Activated CD4-positive, alpha-beta memory T cell treated with anti-CD3 and anti-CD28 coated beads, Interleukin-2, amount 10 ng/mL, durations not matched to agents 7 days and 5 days (primary cell): ENCODE measurements at regions of chr6 and their contacts with region 1.

Region 1: DNA sequence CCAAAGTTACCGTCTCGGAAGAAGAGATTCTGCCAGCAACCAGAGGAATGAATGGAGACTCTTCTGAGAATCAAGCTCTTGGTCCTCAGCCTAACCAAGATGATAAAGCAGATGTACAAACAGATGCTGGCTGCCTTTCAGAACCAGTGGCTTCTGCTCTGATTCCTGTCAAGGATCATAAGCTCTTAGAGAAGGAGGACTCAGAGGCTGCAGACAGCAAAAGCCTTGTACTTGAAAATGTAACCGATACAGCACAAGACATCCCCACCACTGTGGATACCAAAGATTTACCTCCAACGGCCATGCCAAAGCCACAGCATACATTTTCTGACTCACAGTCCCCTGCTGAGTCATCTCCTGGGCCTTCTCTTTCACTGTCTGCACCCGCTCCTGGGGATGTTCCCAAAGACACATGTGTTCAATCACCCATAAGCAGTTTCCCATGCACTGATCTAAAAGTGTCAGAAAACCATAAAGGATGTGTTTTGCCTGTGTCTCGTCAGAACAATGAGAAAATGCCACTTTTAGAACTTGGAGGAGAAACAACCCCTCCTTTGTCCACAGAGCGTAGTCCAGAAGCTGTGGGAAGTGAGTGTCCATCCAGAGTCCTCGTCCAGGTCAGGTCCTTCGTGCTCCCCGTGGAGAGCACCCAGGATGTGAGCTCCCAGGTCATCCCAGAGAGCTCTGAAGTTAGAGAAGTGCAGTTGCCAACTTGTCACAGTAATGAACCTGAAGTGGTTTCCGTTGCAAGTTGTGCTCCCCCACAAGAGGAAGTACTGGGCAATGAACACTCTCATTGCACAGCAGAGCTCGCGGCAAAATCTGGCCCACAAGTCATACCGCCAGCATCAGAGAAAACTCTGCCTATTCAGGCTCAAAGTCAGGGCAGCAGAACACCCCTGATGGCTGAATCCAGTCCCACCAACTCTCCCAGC is 109.6 kb downstream of the RTN4IP1 start:
- DNase-seq: peak; percentile 89
- H3K4me3 Mint-ChIP-seq: peak overlapping the region; percentile 79
- H3K27ac Mint-ChIP-seq: peak overlapping the region; percentile 97
- H3K4me1 Mint-ChIP-seq: peaks cover 64% of the 10 kb centered on the region
- H3K27me3 Mint-ChIP-seq: no peaks in the 10 kb centered on the region

Region 2: DNA sequence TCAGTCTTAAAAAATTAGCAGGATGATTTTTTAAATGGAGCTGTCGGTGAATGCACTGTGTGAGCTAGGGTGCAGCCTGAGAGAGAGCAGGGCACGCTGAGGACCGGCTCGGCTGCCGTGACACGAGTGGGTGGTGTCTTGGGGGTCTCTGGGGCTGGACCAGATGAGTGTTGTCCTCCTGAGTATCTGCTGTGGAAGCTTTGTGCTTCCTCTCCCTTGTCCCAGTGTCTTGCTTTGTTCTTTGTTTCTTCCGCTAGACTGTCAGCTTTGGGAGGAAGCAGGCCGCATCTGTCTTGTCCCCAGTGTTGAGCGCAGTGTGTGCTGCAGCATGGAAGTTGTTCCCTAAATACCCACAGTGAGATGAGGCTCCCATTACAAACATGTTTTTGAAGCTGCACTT is 20.2 kb after region 1 on chr6:
- CTCF ChIA-PET with region 1: interaction called, 8 read pairs
- POLR2A ChIA-PET with region 1: interaction called, 123 read pairs
- DNase-seq: no peak
- H3K4me3 Mint-ChIP-seq: no peak overlapping the region
- H3K27ac Mint-ChIP-seq: no peak overlapping the region
- H3K4me1 Mint-ChIP-seq: peaks cover 48% of the 10 kb centered on the region
- H3K27me3 Mint-ChIP-seq: no peaks in the 10 kb centered on the region

Region 3: DNA sequence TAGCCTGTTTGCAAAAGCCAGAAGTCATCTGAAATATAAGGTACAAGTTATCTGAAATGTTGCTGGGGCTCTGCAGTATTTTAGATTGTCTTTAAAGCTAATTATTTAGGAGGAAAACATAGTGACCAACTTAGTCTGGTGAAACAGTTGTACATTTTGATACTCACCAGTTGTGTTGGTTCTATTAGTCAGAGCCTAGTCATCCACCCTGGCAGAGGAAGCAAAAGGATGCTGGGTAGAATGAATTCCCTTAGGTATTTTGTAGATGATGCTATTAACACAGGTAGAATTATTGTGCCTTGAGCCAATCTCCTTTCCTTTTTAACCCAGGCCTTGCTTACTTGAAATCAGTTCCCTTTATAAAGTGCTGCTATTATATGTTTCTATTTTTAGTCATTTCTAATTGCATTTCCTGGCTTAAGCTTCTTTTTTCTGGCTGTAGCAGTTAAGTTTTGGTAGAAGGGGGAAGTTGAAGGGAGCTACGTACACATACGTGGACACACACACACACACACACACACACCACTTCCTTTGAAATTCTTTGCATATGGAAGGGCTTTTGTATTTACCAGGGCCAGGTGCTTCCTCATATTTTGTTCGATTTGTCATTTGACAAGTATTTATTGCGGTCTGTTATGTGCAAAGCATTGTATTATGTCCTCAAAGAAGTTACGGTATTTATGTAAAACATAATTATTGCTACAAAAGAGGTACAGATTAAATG is 27.1 kb after region 1 on chr6:
- CTCF ChIA-PET with region 1: no interaction called
- POLR2A ChIA-PET with region 1: interaction called, 27 read pairs
- DNase-seq: no peak
- H3K4me3 Mint-ChIP-seq: no peak overlapping the region
- H3K27ac Mint-ChIP-seq: peak overlapping the region; percentile 44
- H3K4me1 Mint-ChIP-seq: peaks cover 30% of the 10 kb centered on the region
- H3K27me3 Mint-ChIP-seq: no peaks in the 10 kb centered on the region

Region 4: DNA sequence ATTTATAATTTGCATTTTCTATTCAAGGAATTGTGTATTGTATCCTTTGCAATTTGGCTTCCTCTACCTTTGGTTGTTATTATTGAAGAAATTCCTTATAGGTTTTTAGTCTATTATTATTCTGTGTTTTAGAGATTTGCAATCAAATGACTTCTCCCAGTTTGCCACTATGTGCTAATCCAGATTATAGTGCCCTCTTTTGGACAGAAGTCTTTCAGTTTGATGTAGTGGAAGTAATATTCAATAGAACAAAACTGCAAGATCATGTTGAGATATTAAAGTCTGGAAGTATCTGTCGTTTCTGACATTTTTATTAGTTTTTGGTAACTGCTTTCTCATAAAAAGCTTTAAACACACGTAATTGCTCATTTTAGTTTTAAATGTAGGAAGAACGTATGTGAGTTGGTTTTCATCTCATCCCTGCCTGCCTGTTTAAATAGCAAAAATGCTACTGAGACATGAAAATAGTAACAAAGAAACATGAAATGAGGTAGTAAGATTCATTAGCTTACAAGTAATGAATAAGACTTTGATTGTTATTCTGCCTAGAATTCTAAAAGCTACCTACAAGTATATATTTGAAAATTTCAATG is 36.7 kb after region 1 on chr6:
- CTCF ChIA-PET with region 1: interaction called, 3 read pairs
- POLR2A ChIA-PET with region 1: interaction called, 27 read pairs
- DNase-seq: no peak
- H3K4me3 Mint-ChIP-seq: no peak overlapping the region
- H3K27ac Mint-ChIP-seq: no peak overlapping the region
- H3K4me1 Mint-ChIP-seq: peaks cover 26% of the 10 kb centered on the region
- H3K27me3 Mint-ChIP-seq: no peaks in the 10 kb centered on the region

Region 5: GRCh38 chr6:106617302-106617701 is 97.6 kb after region 1 on chr6:
- CTCF ChIA-PET with region 1: interaction called, 4 read pairs
- POLR2A ChIA-PET with region 1: interaction called, 26 read pairs
- DNase-seq: no peak
- H3K4me3 Mint-ChIP-seq: no peak overlapping the region
- H3K27ac Mint-ChIP-seq: no peak overlapping the region
- H3K4me1 Mint-ChIP-seq: peaks cover 43% of the 10 kb centered on the region
- H3K27me3 Mint-ChIP-seq: no peaks in the 10 kb centered on the region